BJ (cell line): ENCODE measurements at regions of chr9 and their contacts with region 1.

Region 1: DNA sequence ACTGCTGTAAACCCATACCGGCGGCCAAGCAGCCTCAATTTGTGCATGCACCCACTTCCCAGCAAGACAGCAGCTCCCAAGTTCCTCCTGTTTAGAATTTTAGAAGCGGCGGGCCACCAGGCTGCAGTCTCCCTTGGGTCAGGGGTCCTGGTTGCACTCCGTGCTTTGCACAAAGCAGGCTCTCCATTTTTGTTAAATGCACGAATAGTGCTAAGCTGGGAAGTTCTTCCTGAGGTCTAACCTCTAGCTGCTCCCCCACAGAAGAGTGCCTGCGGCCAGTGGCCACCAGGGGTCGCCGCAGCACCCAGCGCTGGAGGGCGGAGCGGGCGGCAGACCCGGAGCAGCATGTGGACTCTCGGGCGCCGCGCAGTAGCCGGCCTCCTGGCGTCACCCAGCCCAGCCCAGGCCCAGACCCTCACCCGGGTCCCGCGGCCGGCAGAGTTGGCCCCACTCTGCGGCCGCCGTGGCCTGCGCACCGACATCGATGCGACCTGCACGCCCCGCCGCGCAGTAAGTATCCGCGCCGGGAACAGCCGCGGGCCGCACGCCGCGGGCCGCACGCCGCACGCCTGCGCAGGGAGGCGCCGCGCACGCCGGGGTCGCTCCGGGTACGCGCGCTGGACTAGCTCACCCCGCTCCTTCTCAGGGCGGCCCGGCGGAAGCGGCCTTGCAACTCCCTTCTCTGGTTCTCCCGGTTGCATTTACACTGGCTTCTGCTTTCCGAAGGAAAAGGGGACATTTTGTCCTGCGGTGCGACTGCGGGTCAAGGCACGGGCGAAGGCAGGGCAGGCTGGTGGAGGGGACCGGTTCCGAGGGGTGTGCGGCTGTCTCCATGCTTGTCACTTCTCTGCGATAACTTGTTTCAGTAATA is at the start of gene FXN:
- DNase-seq: no peak
- H3K4me3 ChIP-seq: peak within 1 kb of the TSS; percentile 60
- H3K27me3 ChIP-seq: no peaks in the 10 kb centered on the region; the same call in 1 of the 2 replicates
- CTCF ChIP-seq: peak; percentile 98
- polyA plus RNA-seq, gene FXN: 9.2 and 14.8 TPM in 2 replicates

Region 2: GRCh38 chr9:68844157-68844556 is 191.5 kb before region 1 on chr9:
- CTCF ChIA-PET with region 1: no interaction called
- POLR2A ChIA-PET with region 1: no interaction called
- DNase-seq: no peak
- H3K4me3 ChIP-seq: no peak overlapping the region
- H3K27me3 ChIP-seq: no peaks in the 10 kb centered on the region
- CTCF ChIP-seq: no peak

Region 3: GRCh38 chr9:69186841-69187611 is 151.4 kb after region 1 on chr9:
- CTCF ChIA-PET with region 1: interaction called, 19 read pairs
- POLR2A ChIA-PET with region 1: no interaction called
- DNase-seq: no peak
- H3K4me3 ChIP-seq: no peak overlapping the region
- H3K27me3 ChIP-seq: no peaks in the 10 kb centered on the region
- CTCF ChIP-seq: no peak

Region 4: DNA sequence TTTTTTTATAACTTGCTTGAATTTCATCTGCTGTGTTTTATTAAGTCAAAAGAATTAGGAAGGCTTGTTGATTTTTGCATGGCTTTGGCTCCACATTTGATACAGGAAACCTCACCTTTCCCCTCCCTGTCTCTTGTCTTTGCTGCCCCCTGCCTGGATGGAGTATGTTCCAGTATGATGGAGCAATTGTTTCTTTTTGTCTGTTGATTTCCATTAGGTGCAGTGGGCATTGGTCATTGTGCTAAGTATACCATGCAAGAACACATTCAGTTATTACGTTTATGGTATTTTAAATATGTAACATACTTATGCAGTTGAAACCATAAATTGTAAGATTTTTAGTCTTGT is 158.0 kb after region 1 on chr9:
- CTCF ChIA-PET with region 1: interaction called, 19 read pairs
- POLR2A ChIA-PET with region 1: no interaction called
- DNase-seq: no peak
- H3K4me3 ChIP-seq: no peak overlapping the region
- H3K27me3 ChIP-seq: no peaks in the 10 kb centered on the region
- CTCF ChIP-seq: no peak

Region 5: GRCh38 chr9:69199769-69200470 is 164.2 kb after region 1 on chr9:
- CTCF ChIA-PET with region 1: interaction called, 19 read pairs
- POLR2A ChIA-PET with region 1: no interaction called
- DNase-seq: no peak
- H3K4me3 ChIP-seq: no peak overlapping the region
- H3K27me3 ChIP-seq: no peaks in the 10 kb centered on the region
- CTCF ChIP-seq: no peak